ENCODE measurements at regions of chr17 and their contacts with region 1.

Region 1: GRCh38 chr17:64506576-64507477 is at the start of gene CEP95:
- DNase-seq: peak in 7 of 9 donors; percentile 85 to 98 (median 97)
- ATAC-seq: peak; percentile 78
- H3K4me3 ChIP-seq: peak within 1 kb of the TSS; percentile 98
- H3K4me3 Mint-ChIP-seq: peak within 1 kb of the TSS; percentile 97 to 100 (median 99)
- H3K27ac ChIP-seq: peak within 1 kb of the TSS; percentile 100
- H3K27ac Mint-ChIP-seq: peak within 1 kb of the TSS; percentile 99 to 100 (median 100)
- H3K4me1 ChIP-seq: peaks cover 41 to 42% of the 10 kb centered on the region in 2 donors
- H3K4me1 Mint-ChIP-seq: peaks cover 31 to 84% (median 70%) of the 10 kb centered on the region in 7 donors
- H3K27me3 ChIP-seq: no peaks in the 10 kb centered on the region
- H3K27me3 Mint-ChIP-seq: peaks cover 0 to 11% (median 0%) of the 10 kb centered on the region in 5 donors
- total RNA-seq, gene CEP95: 46.7 to 192 (median 115) TPM

Region 2: GRCh38 chr17:63549946-63550807 is 956.6 kb before region 1 on chr17 and contains the start of gene DCAF7:
- CTCF ChIA-PET with region 1: no interaction called
- POLR2A ChIA-PET with region 1: no interaction called
- intact Hi-C with region 1: loop called in 1 of 2 experiments (anchors 2 kb)
- DNase-seq: peak; percentile 93 to 99 (median 99)
- ATAC-seq: peak; percentile 97
- H3K4me3 ChIP-seq: peak within 1 kb of the TSS; percentile 93
- H3K4me3 Mint-ChIP-seq: peak within 1 kb of the TSS; percentile 85 to 99 (median 98)
- H3K27ac ChIP-seq: peak within 1 kb of the TSS; percentile 90
- H3K27ac Mint-ChIP-seq: peak within 1 kb of the TSS; percentile 94 to 97 (median 96)
- H3K4me1 ChIP-seq: peaks cover 18 to 27% of the 10 kb centered on the region in 2 donors
- H3K4me1 Mint-ChIP-seq: peaks cover 32 to 50% (median 41%) of the 10 kb centered on the region in 7 donors
- H3K27me3 ChIP-seq: no peaks in the 10 kb centered on the region
- H3K27me3 Mint-ChIP-seq: peaks cover 0 to 2% (median 0%) of the 10 kb centered on the region in 5 donors
- total RNA-seq, gene DCAF7: 26.0 to 128 (median 70.0) TPM

Region 3: DNA sequence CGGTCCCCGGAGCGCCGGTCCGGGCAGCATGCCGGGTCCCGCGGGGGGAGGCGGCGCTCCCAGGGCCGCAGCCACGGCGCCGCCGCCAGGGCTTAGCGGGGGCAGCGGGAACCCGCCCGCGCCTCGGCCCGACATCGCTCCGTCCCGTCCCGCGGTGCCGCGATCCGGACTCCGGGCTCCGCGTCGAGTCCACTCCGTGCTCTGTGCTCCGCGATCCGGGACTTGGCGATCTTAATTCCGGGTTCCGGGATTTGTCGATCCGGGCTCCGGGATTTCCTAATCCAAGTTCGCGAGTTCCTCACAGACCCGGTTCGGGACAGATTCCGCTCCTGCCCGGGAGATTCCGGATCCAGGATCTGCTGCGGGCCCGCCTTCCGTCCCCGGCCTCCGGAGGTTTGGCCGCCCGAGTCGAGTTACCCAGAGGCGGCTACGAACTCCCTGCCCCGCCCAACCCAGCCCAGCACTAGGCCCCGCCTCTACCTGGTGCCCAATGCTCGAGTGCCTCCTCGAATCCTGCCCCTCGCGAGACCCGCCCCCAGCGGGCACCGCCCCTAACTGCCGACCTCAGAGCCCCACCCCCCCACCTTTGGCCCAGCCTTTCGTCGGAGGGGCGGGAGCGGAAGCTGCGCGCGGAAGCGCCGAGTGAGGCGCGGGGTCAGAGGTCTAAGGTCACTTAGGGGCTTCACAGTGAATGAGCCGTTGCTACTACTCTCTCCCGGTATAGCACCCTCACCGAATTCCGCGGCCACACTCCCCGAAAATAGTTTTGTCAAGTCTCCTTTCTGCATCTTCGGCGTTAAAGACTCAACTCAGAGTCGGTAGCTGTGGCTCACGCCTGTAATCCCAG is 664.1 kb before region 1 on chr17 and contains the start of gene SMARCD2:
- CTCF ChIA-PET with region 1: no interaction called
- POLR2A ChIA-PET with region 1: interaction called, 3 read pairs
- intact Hi-C with region 1: loop called (anchors 1 kb)
- DNase-seq: peak; percentile 94 to 99 (median 98)
- ATAC-seq: peak; percentile 96
- H3K4me3 ChIP-seq: peak within 1 kb of the TSS; percentile 87
- H3K4me3 Mint-ChIP-seq: peak within 1 kb of the TSS; percentile 92 to 98 (median 95)
- H3K27ac ChIP-seq: peak within 1 kb of the TSS; percentile 96
- H3K27ac Mint-ChIP-seq: peak within 1 kb of the TSS; percentile 87 to 95 (median 92)
- H3K4me1 ChIP-seq: peaks cover 34 to 36% of the 10 kb centered on the region in 2 donors
- H3K4me1 Mint-ChIP-seq: peaks cover 27 to 52% (median 44%) of the 10 kb centered on the region in 7 donors
- H3K27me3 ChIP-seq: no peaks in the 10 kb centered on the region
- H3K27me3 Mint-ChIP-seq: no peaks in the 10 kb centered on the region
- total RNA-seq, gene SMARCD2: 102 to 148 (median 109) TPM

Region 4: DNA sequence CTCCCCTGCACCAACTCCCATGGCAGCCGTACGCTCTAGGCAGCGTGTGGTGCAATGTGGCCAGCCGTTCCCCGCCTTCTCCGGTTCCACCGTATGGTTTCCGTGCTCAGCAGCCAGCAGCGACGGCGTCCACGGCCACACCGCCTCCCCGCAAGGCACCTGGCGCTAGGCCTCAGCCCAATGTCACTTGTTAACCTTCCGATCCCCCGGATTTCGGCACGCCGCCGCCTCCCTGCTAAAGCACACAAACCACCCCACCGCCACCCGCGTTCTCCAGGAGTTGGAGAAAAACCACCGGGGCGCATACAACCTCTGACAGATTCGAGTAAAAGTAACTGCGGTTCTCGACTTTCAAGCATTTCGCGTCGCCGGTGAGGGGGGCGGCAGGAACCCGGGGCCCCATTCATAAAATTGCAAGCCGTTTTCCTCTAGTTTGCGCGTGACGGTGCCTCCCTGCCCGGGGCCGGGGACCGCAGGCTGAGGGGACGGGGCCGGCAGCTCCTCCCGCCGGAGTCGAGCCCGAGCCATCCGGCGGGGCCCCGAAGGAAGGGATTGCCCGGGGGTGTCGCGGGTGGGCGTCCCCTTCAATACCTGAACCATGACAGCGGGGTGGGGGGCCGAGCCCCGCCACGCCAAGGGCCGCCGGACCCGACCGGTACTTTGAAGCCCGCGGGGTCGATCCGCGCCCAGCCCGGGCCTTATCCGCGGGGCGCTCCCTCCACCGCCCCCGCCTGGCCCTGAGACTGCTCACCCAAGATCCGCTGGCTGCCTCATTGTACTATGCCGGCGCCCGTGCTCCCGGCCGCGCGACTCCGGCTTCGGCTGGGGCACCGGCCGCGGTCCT is 244.2 kb before region 1 on chr17 and contains the start of gene TEX2:
- CTCF ChIA-PET with region 1: no interaction called
- POLR2A ChIA-PET with region 1: interaction called, 3 read pairs
- intact Hi-C with region 1: loop called in 1 of 2 experiments (anchors 1 kb)
- DNase-seq: peak; percentile 44 to 82 (median 74)
- ATAC-seq: peak; percentile 56
- H3K4me3 ChIP-seq: peak within 1 kb of the TSS; percentile 99
- H3K4me3 Mint-ChIP-seq: peak within 1 kb of the TSS; percentile 87 to 98 (median 94)
- H3K27ac ChIP-seq: peak within 1 kb of the TSS; percentile 90
- H3K27ac Mint-ChIP-seq: peak within 1 kb of the TSS; percentile 87 to 98 (median 93)
- H3K4me1 ChIP-seq: peaks cover 18% of the 10 kb centered on the region in 2 donors
- H3K4me1 Mint-ChIP-seq: peaks cover 22 to 50% (median 42%) of the 10 kb centered on the region in 7 donors
- H3K27me3 ChIP-seq: no peaks in the 10 kb centered on the region
- H3K27me3 Mint-ChIP-seq: peaks cover 0 to 11% (median 5%) of the 10 kb centered on the region in 5 donors
- total RNA-seq, gene TEX2: 14.1 to 24.2 (median 14.4) TPM

Region 5: GRCh38 chr17:64491034-64491859 is 15.6 kb before region 1 on chr17:
- CTCF ChIA-PET with region 1: interaction called, 30 read pairs
- POLR2A ChIA-PET with region 1: interaction called, 224 read pairs
- intact Hi-C with region 1: loop called in 1 of 2 experiments (anchors 2 kb)
- DNase-seq: peak in 7 of 9 donors; percentile 35 to 56 (median 44)
- ATAC-seq: peak; percentile 82
- H3K4me3 ChIP-seq: no peak overlapping the region
- H3K4me3 Mint-ChIP-seq: peak overlapping the region in 1 of 10 donors; percentile 14
- H3K27ac ChIP-seq: no peak overlapping the region
- H3K27ac Mint-ChIP-seq: no peak overlapping the region
- H3K4me1 ChIP-seq: peaks cover 12 to 15% of the 10 kb centered on the region in 2 donors
- H3K4me1 Mint-ChIP-seq: peaks cover 19 to 40% (median 28%) of the 10 kb centered on the region in 7 donors
- H3K27me3 ChIP-seq: no peaks in the 10 kb centered on the region
- H3K27me3 Mint-ChIP-seq: no peaks in the 10 kb centered on the region

Region 6: DNA sequence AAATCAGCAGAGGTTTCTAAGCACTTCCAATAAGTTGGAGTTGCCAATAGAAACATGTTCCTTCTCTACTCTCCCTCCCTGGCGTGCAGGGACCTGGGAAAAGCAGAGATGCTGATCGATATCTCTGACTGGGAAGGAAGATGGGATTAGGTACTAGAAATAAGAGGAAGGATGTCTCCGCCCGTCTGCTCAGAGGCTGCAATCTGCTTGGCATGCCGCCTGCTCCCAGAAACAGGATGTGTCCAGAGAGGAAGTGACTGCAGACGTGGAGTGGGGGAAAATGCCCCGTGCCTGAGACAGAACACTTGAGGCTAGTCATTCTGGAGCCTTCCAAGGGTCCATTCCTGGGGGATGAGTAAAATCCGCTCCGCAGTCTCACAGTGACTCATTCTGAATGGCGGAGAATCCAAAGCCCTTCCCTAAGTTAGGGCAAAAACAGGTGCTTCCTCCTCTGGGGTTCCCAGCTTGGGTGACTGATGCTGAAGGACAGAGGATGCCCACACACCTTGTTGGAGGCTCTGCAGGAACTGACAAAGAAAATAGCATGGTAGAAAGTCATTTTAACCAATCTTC is 200.3 kb after region 1 on chr17:
- CTCF ChIA-PET with region 1: no interaction called
- POLR2A ChIA-PET with region 1: interaction called, 12 read pairs
- intact Hi-C with region 1: no loop called
- DNase-seq: no peak
- ATAC-seq: no peak
- H3K4me3 ChIP-seq: no peak overlapping the region
- H3K4me3 Mint-ChIP-seq: peak overlapping the region in 5 of 10 donors; percentile 11 to 30 (median 23)
- H3K27ac ChIP-seq: no peak overlapping the region
- H3K27ac Mint-ChIP-seq: peak overlapping the region in 8 of 9 donors; percentile 0 to 65 (median 31)
- H3K4me1 ChIP-seq: peaks cover 24 to 33% of the 10 kb centered on the region in 2 donors
- H3K4me1 Mint-ChIP-seq: peaks cover 35 to 59% (median 52%) of the 10 kb centered on the region in 7 donors
- H3K27me3 ChIP-seq: no peaks in the 10 kb centered on the region
- H3K27me3 Mint-ChIP-seq: peaks cover 0 to 6% (median 0%) of the 10 kb centered on the region in 5 donors

Region 7: GRCh38 chr17:64984851-64985521 is 478.2 kb after region 1 on chr17:
- CTCF ChIA-PET with region 1: no interaction called
- POLR2A ChIA-PET with region 1: no interaction called
- intact Hi-C with region 1: loop called in 1 of 2 experiments (anchors 1 kb)
- DNase-seq: peak in 8 of 9 donors; percentile 37 to 86 (median 62)
- ATAC-seq: peak; percentile 60
- H3K4me3 ChIP-seq: peak overlapping the region; percentile 52
- H3K4me3 Mint-ChIP-seq: peak overlapping the region; percentile 76 to 96 (median 80)
- H3K27ac ChIP-seq: peak overlapping the region; percentile 88
- H3K27ac Mint-ChIP-seq: peak overlapping the region; percentile 96 to 100 (median 98)
- H3K4me1 ChIP-seq: peaks cover 24 to 35% of the 10 kb centered on the region in 2 donors
- H3K4me1 Mint-ChIP-seq: peaks cover 13 to 52% (median 32%) of the 10 kb centered on the region in 7 donors
- H3K27me3 ChIP-seq: no peaks in the 10 kb centered on the region
- H3K27me3 Mint-ChIP-seq: no peaks in the 10 kb centered on the region

Measured in naive thymus-derived CD4-positive, alpha-beta T cell (primary cell).